B cell (primary cell): ENCODE measurements at regions of chr1 and their contacts with region 1.

Region 1: DNA sequence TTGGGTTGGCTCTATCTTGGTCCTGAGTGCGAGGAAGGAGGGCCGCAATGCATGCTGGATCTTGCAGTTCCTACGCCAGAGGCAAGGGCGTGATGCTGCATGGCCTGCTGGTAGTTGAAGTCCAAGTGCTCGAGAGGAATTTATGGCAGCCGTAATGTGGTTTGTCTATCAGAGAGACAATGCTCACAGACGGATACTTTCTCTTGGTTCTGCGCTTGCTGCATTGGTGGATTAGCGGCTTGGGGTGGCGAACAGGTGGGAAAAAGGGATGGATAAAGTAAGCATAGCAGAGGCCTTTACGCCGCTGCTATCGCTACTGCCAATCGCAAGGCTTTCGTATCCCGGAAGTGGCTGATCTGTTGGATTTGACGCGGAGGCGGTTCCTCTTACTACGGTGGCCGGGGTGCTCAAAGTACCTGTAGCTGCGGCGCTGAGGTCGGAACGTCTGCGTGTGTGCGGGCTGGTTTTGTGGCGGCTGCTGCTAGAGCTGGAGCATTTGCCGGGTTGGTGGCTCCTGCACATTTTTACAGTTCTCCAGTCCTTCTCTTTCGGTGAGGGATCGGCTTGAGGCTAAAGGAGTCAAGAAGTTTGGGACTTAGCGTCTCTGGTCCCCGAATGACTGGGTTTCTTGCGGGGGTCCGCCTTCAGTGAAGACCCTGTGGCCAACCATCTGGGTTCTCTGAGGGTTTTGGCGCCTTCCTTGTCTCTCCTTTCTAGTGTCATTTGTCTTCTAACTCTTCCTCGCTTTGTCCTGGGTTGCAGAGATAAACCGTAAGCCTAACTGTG is at the start of gene ATG4C:
- DNase-seq: peak; percentile 98
- ATAC-seq: peak; percentile 95
- H3K4me3 ChIP-seq: peak within 1 kb of the TSS; percentile 82 to 99 (median 91)
- H3K4me3 Mint-ChIP-seq: no peak within 1 kb of the TSS
- H3K27ac ChIP-seq: peak within 1 kb of the TSS; percentile 86 to 88
- H3K27ac Mint-ChIP-seq: no peak within 1 kb of the TSS
- H3K4me1 ChIP-seq: peaks cover 7 to 25% of the 10 kb centered on the region in 2 donors
- H3K4me1 Mint-ChIP-seq: peaks cover 18% of the 10 kb centered on the region
- H3K27me3 ChIP-seq: no peaks in the 10 kb centered on the region
- H3K27me3 Mint-ChIP-seq: peaks cover 3% of the 10 kb centered on the region
- CTCF ChIP-seq: no peak
- total RNA-seq, gene ATG4C: 23.5 and 30.8 TPM in 2 replicates

Region 2: GRCh38 chr1:62436466-62437256 is 347.3 kb before region 1 on chr1 and contains the start of gene USP1:
- CTCF ChIA-PET with region 1: no interaction called
- POLR2A ChIA-PET with region 1: no interaction called
- intact Hi-C with region 1: loop called (anchors 1 kb)
- DNase-seq: peak; percentile 99
- ATAC-seq: peak; percentile 79
- H3K4me3 ChIP-seq: peak within 1 kb of the TSS; percentile 87 to 98 (median 97)
- H3K4me3 Mint-ChIP-seq: peak within 1 kb of the TSS; percentile 98
- H3K27ac ChIP-seq: peak within 1 kb of the TSS; percentile 97
- H3K27ac Mint-ChIP-seq: peak within 1 kb of the TSS; percentile 100
- H3K4me1 ChIP-seq: peaks cover 20 to 28% of the 10 kb centered on the region in 2 donors
- H3K4me1 Mint-ChIP-seq: peaks cover 47% of the 10 kb centered on the region
- H3K27me3 ChIP-seq: no peaks in the 10 kb centered on the region
- H3K27me3 Mint-ChIP-seq: no peaks in the 10 kb centered on the region
- CTCF ChIP-seq: no peak
- total RNA-seq, gene USP1: 32.5 and 32.7 TPM in 2 replicates

Region 3: GRCh38 chr1:62794053-62794452 is 10.1 kb after region 1 on chr1:
- CTCF ChIA-PET with region 1: interaction called, 4 read pairs
- POLR2A ChIA-PET with region 1: no interaction called
- intact Hi-C with region 1: loop called (anchors 1 kb)
- DNase-seq: peak; percentile 56
- ATAC-seq: peak; percentile 76
- H3K4me3 ChIP-seq: peak overlapping the region in 1 of 5 experiments; percentile 25
- H3K4me3 Mint-ChIP-seq: peak overlapping the region; percentile 28
- H3K27ac ChIP-seq: peak overlapping the region; percentile 47 to 83
- H3K27ac Mint-ChIP-seq: peak overlapping the region; percentile 86
- H3K4me1 ChIP-seq: peaks cover 38 to 51% of the 10 kb centered on the region in 2 donors
- H3K4me1 Mint-ChIP-seq: peaks cover 48% of the 10 kb centered on the region
- H3K27me3 ChIP-seq: no peaks in the 10 kb centered on the region
- H3K27me3 Mint-ChIP-seq: no peaks in the 10 kb centered on the region
- CTCF ChIP-seq: no peak

Region 4: GRCh38 chr1:62810420-62811274 is 26.7 kb after region 1 on chr1:
- CTCF ChIA-PET with region 1: no interaction called
- POLR2A ChIA-PET with region 1: interaction called, 3 read pairs
- intact Hi-C with region 1: loop called (anchors 2 kb)
- DNase-seq: peak; percentile 63
- ATAC-seq: peak; percentile 76
- H3K4me3 ChIP-seq: peak overlapping the region in 1 of 5 experiments; percentile 32
- H3K4me3 Mint-ChIP-seq: peak overlapping the region; percentile 80
- H3K27ac ChIP-seq: peak overlapping the region; percentile 45 to 59
- H3K27ac Mint-ChIP-seq: peak overlapping the region; percentile 85
- H3K4me1 ChIP-seq: peaks cover 26 to 28% of the 10 kb centered on the region in 2 donors
- H3K4me1 Mint-ChIP-seq: peaks cover 39% of the 10 kb centered on the region
- H3K27me3 ChIP-seq: no peaks in the 10 kb centered on the region
- H3K27me3 Mint-ChIP-seq: no peaks in the 10 kb centered on the region
- CTCF ChIP-seq: no peak

Region 5: DNA sequence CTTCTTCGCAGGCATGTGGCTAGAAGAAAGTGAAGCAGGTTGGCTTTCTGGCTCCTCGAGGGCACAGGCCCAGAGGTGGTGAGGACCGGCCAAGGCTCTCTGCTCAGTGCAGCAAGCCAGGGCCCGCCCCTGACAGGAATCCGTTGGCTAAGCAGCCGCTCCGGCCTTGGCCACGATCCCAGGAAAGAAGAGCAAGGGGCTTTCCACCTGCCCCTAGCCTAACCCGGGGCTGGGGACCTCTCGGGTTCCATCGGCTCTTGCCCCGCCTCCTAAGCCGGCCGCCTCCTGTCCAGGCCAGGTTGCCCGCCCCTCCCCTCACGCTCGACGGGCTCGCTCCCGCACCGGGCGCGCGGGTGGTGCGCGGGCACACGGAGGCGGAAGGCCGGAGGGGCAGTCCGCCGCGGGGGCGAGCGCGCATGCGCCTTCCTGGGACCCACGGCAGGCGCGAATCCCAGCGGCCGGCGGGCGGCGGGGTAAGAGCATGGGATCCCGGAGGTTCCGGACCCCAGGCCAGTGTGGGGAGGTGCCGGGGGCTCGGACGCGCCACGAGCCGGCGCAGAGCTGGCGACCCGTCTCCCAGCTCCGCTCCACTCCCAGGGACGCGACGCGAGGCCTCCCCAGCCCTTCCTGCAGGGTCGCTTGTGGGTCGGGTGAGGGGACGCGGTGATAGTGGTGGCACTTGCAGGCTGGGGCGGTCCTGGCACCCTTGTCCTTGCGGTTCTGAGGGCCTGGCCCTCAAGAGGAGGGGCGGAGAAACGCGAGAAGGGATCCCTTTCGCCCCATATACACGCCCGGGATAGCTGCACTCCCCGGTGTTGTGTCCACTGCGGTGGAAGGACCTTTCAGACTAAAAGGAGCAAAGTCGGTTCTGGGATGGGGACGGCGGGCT is 583.5 kb after region 1 on chr1 and contains the start of gene ALG6:
- CTCF ChIA-PET with region 1: no interaction called
- POLR2A ChIA-PET with region 1: no interaction called
- intact Hi-C with region 1: loop called (anchors 5 kb)
- DNase-seq: peak; percentile 94
- ATAC-seq: peak; percentile 95
- H3K4me3 ChIP-seq: peak within 1 kb of the TSS; percentile 66 to 97 (median 83)
- H3K4me3 Mint-ChIP-seq: peak within 1 kb of the TSS; percentile 99
- H3K27ac ChIP-seq: peak within 1 kb of the TSS; percentile 70 to 82
- H3K27ac Mint-ChIP-seq: peak within 1 kb of the TSS; percentile 92
- H3K4me1 ChIP-seq: peaks cover 9 to 15% of the 10 kb centered on the region in 2 donors
- H3K4me1 Mint-ChIP-seq: peaks cover 19% of the 10 kb centered on the region
- H3K27me3 ChIP-seq: no peaks in the 10 kb centered on the region
- H3K27me3 Mint-ChIP-seq: peaks cover 6% of the 10 kb centered on the region
- CTCF ChIP-seq: no peak
- total RNA-seq, gene ALG6: 31.4 and 35.0 TPM in 2 replicates

Region 6: DNA sequence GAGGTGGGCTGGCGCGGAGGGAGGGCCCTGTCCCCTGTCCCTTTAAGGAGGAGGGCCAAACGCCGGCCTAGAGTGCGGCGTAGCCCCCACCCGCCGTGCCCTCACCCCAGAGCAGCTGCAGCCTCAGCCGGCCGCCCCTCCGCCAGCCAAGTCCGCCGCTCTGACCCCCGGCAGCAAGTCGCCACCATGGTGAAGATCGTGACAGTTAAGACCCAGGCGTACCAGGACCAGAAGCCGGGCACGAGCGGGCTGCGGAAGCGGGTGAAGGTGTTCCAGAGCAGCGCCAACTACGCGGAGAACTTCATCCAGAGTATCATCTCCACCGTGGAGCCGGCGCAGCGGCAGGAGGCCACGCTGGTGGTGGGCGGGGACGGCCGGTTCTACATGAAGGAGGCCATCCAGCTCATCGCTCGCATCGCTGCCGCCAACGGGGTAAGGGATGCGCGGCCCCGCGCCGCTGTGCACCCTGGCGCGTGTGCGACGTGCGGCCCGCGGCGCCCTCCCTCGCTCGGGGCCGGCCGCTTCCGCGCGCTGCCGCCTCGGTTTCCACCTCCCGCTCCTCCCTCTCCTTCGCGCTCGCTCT is 809.5 kb after region 1 on chr1 and contains the start of gene PGM1:
- CTCF ChIA-PET with region 1: no interaction called
- POLR2A ChIA-PET with region 1: no interaction called
- intact Hi-C with region 1: loop called (anchors 5 kb)
- DNase-seq: peak; percentile 81
- ATAC-seq: peak; percentile 81
- H3K4me3 ChIP-seq: peak within 1 kb of the TSS; percentile 32 to 92 (median 80)
- H3K4me3 Mint-ChIP-seq: peak within 1 kb of the TSS; percentile 98
- H3K27ac ChIP-seq: peak within 1 kb of the TSS; percentile 78 to 88
- H3K27ac Mint-ChIP-seq: peak within 1 kb of the TSS; percentile 98
- H3K4me1 ChIP-seq: peaks cover 6 to 9% of the 10 kb centered on the region in 2 donors
- H3K4me1 Mint-ChIP-seq: peaks cover 13% of the 10 kb centered on the region
- H3K27me3 ChIP-seq: no peaks in the 10 kb centered on the region
- H3K27me3 Mint-ChIP-seq: no peaks in the 10 kb centered on the region
- CTCF ChIP-seq: no peak
- total RNA-seq, gene PGM1: 13.2 and 17.3 TPM in 2 replicates